ENCODE measurements at regions of chr5 and their contacts with region 1.

Region 1: DNA sequence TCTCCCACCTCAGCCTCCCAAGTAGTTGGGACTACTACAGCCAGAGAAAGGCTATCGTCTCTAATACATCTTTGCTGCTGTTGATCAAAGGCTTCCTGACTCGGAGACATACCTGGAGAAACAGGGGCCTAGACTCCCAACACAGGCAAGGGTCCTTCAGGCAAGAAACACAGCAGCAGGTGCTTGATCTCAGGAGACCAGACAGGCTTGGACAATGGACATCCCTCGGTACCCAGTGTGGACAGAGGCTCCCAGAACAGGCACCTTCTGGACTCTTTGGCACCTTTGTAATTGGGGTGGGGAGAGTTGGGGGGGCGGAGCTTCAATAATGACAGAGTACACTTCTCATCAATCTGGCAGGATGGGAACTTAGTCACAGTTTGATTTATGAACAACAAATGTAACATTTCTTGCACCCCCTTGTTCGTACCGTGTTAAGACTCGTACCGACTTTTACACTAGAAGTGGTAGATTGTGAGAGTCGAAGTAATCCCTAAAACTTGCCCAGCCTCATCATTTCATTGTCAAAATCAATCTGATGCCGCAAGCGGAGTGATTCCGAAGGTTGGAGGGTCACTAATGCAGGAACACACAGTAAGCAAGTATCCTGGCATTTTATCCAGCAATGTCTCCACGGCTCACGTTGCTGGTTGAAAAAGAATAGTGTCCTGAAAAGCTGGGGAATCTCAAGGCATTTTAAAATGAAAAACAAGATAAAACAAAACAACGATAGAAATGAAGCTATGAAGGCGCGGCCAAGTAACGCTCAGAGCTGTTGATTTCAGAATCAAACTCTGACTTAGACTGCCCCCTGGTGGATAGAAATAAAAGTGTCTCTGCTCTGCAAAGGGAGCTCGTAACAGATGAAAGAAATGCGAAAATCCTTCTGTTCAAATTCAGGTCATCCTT is 46.4 kb upstream of the STK32A start:
- DNase-seq: peak in 3 of 6 donors; percentile 38 to 61 (median 39)
- ATAC-seq: peak; percentile 68 to 94 (median 89)
- H3K4me3 ChIP-seq: peak overlapping the region in 1 of 4 donors; percentile 28
- H3K27ac ChIP-seq: no peak overlapping the region
- H3K4me1 ChIP-seq: peaks cover 0 to 7% (median 0%) of the 10 kb centered on the region in 3 donors
- H3K27me3 ChIP-seq: no peaks in the 10 kb centered on the region
- CTCF ChIP-seq: peak; percentile 79 to 95 (median 93)

Region 2: DNA sequence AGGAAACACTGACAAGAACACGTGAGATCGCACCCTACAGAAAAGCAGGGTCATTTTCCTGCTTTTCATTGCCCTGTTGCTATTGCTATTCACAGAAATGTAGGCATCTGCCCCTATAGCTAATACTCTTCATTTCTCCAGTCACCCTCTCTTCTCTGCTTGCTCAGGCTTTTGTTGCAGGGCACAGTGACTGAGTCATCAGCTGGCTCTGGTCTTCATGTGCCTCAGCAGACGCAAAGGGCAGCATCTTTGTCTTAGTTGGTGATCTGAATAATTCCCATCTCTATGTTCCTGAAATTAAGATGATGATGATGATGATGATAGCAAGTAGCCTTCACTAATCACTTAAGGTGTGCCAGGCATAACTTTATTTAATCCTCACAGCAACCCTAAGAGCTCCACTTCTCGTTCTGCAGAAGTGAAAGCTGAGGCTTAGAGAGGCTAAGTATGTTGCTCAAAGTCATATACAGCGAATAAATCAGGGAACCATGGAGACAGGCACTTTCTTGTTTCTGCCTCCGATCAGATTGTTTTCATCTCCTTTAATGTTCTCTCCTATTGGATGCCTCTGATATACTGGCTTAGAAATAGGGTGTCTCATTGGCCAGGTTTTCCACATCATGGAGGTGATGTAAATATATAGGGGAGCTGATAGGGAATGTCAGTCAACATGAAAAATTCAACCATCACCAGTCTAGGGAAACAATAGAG is 86.6 kb before region 1 on chr5:
- intact Hi-C with region 1: loop called in 1 of 3 experiments (anchors 10 kb)
- DNase-seq: no peak
- ATAC-seq: no peak
- H3K4me3 ChIP-seq: no peak overlapping the region
- H3K27ac ChIP-seq: no peak overlapping the region
- H3K4me1 ChIP-seq: peaks cover 0 to 5% (median 3%) of the 10 kb centered on the region in 3 donors
- H3K27me3 ChIP-seq: no peaks in the 10 kb centered on the region
- CTCF ChIP-seq: no peak